Left ventricle myocardium superior (tissue), 1 donor: ENCODE measurements at regions of chr1 and their contacts with region 1.

Region 1: DNA sequence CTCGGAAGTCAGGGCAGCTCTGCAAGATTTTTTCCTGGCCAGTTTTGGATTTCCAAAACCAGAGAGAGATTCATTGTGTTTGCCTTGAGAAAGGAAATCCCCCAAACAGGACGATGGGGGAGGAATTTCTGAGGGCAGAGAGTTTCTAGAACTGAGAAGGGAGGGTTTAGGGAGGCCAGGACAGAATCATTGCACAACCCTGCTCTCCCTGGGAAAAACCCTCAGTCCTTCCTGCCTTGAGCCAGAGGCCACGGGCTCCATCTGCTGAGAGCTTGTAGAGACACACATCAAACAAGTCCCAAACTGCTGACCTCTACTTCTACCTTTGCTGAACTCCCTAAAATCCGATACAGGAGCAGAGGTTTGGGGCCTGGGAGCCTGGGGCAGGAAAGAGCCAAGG is 99.7 kb downstream of the NMNAT2 start:
- DNase-seq: peak; percentile 85
- ATAC-seq: peak; percentile 98

Region 2: GRCh38 chr1:183198463-183198862 is 120.0 kb before region 1 on chr1:
- intact Hi-C with region 1: no loop called
- DNase-seq: no peak
- ATAC-seq: peak; percentile 41

Region 3: DNA sequence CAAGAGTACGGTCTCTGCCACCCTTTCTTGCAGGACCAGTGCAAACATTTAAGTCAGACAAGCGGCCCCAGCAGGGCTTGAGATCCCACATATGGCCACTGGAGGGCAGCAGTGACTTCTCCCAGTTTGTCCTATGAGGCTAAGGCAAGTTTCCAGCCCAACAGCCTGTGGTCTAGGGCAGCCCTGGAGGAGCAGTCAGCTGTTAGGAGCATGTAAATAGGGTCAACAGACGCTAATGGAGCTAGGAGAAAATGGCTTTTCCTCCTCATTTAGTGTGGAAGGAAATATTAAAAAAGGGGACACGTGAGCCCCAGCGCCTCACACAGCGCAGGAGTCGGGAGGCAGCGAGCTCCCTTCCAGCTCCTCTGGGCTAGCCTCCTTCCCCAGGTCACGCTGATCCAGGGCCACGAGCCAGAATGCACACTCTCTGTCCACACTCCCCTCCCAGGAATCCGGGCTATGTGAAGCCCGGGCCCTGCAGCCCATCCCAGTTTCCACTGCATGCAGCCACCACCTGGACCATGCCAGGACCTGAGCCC is 36.8 kb before region 1 on chr1:
- intact Hi-C with region 1: loop called (anchors 5 kb)
- DNase-seq: peak; percentile 94
- ATAC-seq: peak; percentile 94

Region 4: GRCh38 chr1:183363972-183364371 is 45.5 kb after region 1 on chr1:
- intact Hi-C with region 1: no loop called
- DNase-seq: no peak
- ATAC-seq: no peak